Colonic mucosa (tissue), 4 donors: ENCODE measurements at regions of chr2 and their contacts with region 1.

Region 1: DNA sequence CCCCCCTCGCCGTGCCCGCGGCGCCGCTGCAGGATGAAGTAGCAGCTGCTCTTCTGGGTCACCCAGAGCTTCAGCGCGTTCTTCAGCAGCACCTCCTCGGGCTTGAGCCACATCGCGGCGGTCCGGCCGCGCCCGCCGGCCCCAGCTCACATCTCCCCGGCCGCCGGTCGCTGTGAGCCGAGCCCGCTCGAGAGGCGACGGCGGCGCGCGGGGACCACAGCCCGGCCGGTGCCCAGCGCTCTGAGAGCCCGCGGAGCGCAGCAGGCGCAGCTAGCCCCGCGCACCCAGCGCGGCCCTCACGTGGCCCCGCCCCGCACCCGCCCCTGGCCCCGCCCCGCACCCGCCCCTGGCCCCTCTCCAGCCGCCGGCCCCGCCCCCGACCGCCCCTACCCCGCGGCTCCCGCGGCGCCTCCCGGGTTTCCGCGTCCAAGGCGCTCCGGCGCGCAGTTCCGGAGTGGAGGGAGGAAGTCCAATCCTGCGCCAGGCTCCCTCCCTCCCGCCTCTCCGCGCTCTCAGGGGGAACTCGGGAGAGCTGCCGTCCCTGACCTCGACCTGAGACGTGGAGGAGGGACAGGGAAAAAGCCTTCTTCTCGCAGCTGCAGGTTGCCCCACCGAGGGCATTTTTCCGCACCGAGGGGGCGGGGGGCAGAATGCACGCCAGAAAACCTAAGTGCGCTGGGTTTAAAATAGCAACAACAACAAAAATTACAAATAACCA is at the start of gene TBC1D8:
- DNase-seq: peak; percentile 90
- H3K4me3 ChIP-seq: peak within 1 kb of the TSS; percentile 63
- H3K27ac ChIP-seq: peak within 1 kb of the TSS; percentile 66
- H3K4me1 ChIP-seq: no peaks in the 10 kb centered on the region
- H3K27me3 ChIP-seq: no peaks in the 10 kb centered on the region
- CTCF ChIP-seq: no peak
- total RNA-seq, gene TBC1D8: 10.3 to 11.8 TPM

Region 2: DNA sequence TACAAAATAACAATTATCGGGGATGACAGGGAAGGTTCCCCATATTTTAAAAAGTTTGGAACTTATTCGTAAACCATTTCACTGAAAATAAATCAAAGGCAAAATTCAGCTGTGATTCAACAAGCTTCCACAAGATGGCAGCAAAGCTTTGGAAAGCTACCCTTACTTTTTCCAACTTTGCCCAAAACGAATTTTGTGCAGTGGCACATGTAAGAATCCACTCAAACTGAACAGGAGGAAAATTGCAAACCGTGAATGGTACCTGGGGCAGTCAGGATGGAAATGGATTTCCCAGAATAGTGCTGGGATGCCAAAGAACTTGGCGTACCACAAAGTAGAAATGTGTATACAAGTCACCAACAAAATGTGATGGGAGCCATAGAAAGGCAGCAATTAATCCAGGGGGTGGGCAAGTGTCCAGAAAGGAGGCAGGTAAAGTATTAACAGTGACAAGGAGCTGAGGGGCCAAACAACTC is 138.6 kb before region 1 on chr2:
- intact Hi-C with region 1: loop called (anchors 5 kb)
- DNase-seq: peak; percentile 44
- H3K4me3 ChIP-seq: no peak overlapping the region
- H3K27ac ChIP-seq: no peak overlapping the region
- H3K4me1 ChIP-seq: no peaks in the 10 kb centered on the region
- H3K27me3 ChIP-seq: no peaks in the 10 kb centered on the region
- CTCF ChIP-seq: peak; percentile 76

Region 3: GRCh38 chr2:101036562-101037457 is 114.5 kb before region 1 on chr2:
- intact Hi-C with region 1: loop called (anchors 2 kb)
- DNase-seq: no peak
- H3K4me3 ChIP-seq: no peak overlapping the region
- H3K27ac ChIP-seq: no peak overlapping the region
- H3K4me1 ChIP-seq: no peaks in the 10 kb centered on the region
- H3K27me3 ChIP-seq: no peaks in the 10 kb centered on the region
- CTCF ChIP-seq: peak; percentile 46

Region 4: DNA sequence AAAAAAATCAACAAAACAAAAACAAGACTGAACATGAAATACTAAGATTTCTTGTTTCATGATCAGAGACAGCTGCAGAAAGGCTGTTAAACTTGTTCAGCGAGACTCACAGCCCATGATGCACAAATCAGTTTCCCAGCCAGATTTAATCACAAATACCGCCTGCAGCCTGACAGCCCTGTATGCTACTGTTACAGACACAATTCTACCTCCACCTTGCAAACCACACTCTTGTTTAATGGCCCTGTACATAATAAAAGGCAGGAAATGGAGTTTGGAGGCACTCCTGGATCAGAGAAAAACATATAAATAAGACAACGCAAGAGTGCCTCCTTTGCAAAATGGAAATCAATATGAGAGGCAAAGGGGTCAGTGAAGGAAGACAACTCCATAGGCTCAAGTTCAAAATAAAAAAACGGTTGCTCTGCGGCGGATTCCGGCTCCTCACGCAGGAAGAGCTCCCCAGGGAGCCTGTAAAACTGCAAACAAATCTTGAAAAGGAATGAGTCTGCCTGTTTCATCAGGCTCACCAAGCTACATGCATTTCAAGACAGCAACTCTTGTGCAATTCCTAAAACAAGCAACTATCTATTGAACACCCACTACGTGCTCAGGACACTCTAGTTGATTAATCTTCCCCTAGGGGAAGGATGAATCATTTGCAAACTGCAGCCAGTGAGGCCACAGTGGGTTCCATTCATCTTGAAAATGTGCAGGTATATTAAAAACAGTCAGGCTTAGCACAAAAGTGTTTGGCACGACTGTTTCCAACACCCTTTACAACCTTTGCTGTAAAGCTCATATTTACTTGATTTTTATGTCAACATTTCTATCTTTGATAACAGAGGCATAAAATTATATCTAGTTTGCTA is 37.7 kb before region 1 on chr2:
- intact Hi-C with region 1: loop called (anchors 5 kb)
- DNase-seq: peak; percentile 46
- H3K4me3 ChIP-seq: no peak overlapping the region
- H3K27ac ChIP-seq: peak overlapping the region; percentile 49
- H3K4me1 ChIP-seq: peaks cover 8% of the 10 kb centered on the region
- H3K27me3 ChIP-seq: no peaks in the 10 kb centered on the region
- CTCF ChIP-seq: no peak